PC-3 (cell line): ENCODE measurements at regions of chrX and their contacts with region 1.

Region 1: GRCh38 chrX:23861215-23861896 is 46.4 kb downstream of the APOO start:
- DNase-seq: no peak
- ATAC-seq: no peak
- H3K4me3 ChIP-seq: no peak overlapping the region
- H3K27ac ChIP-seq: no peak overlapping the region
- H3K4me1 ChIP-seq: no peaks in the 10 kb centered on the region
- H3K27me3 ChIP-seq: no peaks in the 10 kb centered on the region
- CTCF ChIP-seq: no peak

Region 2: GRCh38 chrX:23704673-23705206 is 156.6 kb before region 1 on chrX:
- CTCF ChIA-PET with region 1: interaction called, 11 read pairs
- POLR2A ChIA-PET with region 1: no interaction called
- intact Hi-C with region 1: no loop called
- DNase-seq: no peak
- ATAC-seq: no peak
- H3K4me3 ChIP-seq: no peak overlapping the region
- H3K27ac ChIP-seq: no peak overlapping the region
- H3K4me1 ChIP-seq: no peaks in the 10 kb centered on the region
- H3K27me3 ChIP-seq: no peaks in the 10 kb centered on the region
- CTCF ChIP-seq: no peak